ENCODE measurements at regions of chrX and their contacts with region 1.

Region 1: GRCh38 chrX:65667503-65668376 is at the start of gene MSN:
- DNase-seq: peak; percentile 93
- H3K4me3 Mint-ChIP-seq: peak within 1 kb of the TSS; percentile 97
- H3K27ac Mint-ChIP-seq: peak within 1 kb of the TSS; percentile 97
- H3K4me1 Mint-ChIP-seq: peaks cover 30% of the 10 kb centered on the region
- H3K27me3 Mint-ChIP-seq: no peaks in the 10 kb centered on the region
- total RNA-seq, gene MSN: 480 and 482 TPM in 2 replicates

Region 2: DNA sequence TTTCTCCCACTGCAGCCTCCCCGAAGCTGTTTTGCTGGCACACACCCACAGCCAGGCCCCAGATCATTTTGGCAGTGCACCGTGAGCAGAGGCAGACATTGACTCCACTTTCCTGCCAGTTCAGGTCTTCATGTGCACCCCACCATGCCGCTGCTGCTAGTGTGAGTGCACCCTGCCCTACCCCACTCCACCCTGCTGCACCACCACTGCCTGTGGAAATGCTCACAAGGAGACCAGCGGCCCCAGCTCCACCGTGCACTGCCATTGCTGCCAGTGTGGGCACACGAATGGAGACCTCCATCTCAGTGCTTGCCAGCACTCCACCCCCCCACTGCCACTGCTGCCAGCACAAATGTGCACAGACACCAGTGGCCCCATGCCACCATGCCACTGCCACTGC is 413.9 kb before region 1 on chrX:
- intact Hi-C with region 1: no loop called
- DNase-seq: no peak
- H3K4me3 Mint-ChIP-seq: no peak overlapping the region
- H3K27ac Mint-ChIP-seq: no peak overlapping the region
- H3K4me1 Mint-ChIP-seq: no peaks in the 10 kb centered on the region
- H3K27me3 Mint-ChIP-seq: no peaks in the 10 kb centered on the region

Region 3: DNA sequence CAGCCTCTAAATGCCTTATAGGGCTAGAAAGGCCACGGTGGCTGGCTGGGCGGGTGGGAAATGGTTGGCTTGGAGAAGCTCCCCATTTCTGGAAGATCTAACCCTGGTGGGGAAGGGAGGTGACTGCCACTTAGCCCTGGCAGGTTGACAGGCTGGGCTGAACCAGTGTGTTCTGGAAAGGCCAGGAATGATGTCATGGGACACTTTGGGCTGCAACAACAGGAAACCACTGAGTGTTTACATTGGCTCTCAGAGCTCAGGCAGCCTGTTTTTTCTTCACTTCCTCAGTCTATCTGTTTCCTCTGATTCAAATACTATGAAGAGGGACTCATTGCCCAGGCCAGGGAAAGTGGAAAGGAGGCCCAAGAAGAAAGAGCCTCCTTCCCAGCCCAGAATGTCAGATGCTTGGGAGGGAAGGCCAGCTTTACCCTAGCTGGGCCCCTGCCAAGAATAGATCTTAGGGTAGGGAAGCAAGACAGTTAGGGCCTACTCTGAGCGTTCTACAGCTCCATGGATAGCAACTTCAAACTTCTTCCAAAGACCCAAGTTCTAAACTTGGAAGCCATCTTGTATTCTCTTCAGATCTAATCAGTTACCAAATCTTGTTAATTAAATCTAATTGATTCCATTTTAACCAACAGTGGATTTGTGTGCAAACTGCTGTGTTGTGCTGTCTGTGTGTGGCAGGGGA is 66.1 kb before region 1 on chrX:
- intact Hi-C with region 1: loop called (anchors 1 kb)
- DNase-seq: peak; percentile 85
- H3K4me3 Mint-ChIP-seq: peak overlapping the region; percentile 59
- H3K27ac Mint-ChIP-seq: peak overlapping the region; percentile 94
- H3K4me1 Mint-ChIP-seq: peaks cover 57% of the 10 kb centered on the region
- H3K27me3 Mint-ChIP-seq: no peaks in the 10 kb centered on the region